Mammary epithelial cell (primary cell): ENCODE measurements at regions of chr18 and their contacts with region 1.

Region 1: DNA sequence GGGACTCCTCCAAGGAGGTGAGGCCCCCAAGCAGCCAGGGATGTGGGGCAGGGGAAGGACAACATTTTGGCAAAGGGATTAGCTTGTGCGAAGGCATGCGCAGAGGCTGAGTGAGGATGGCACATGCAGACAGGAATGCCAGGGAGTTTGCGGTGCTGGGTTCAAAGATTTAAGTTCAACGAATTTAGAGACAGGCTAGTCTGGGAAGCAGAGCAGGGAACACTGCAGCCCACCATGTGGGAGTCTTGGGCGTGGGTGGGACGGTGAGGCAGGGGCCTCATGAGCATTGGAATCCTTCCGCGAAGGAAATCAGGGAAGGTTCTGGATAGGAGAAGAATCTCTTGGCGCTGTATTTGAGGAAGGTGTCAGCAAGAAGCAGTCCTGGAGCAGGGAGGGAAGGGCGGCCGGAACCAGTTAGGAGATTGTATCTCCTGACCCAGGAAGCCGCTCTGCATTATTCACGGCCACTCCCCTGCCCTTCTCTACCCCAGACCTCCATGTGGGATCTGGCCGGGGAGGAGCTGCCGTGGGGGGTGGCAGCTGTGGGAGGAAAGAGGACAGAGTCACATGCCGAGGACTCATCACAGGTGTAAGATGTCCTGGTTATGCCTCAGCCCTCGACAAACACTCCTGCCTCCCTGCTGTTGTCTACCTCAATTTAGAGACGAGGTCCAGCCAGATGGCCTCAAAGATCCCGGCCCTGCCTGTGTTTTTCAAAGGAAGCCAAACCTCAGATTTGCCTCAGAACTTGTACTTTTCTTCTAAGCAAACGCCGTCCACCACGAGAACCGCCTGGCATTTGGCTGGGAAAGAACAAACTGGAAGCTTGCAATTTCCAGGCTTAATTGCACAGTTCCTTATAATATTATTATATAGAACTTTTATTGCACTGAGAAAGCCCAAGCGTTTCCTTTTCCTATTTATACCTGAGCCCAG is 123.7 kb upstream of the SMAD2 start:
- DNase-seq: no peak
- H3K4me3 ChIP-seq: no peak overlapping the region
- H3K27ac ChIP-seq: no peak overlapping the region
- H3K4me1 ChIP-seq: peaks cover 18% of the 10 kb centered on the region
- H3K27me3 ChIP-seq: no peaks in the 10 kb centered on the region
- CTCF ChIP-seq: no peak

Region 2: GRCh38 chr18:48085781-48086487 is 31.8 kb after region 1 on chr18:
- CTCF ChIA-PET with region 1: no interaction called
- dilution Hi-C with region 1: no loop called
- in situ Hi-C with region 1: no loop called
- intact Hi-C with region 1: loop called (anchors 5 kb)
- DNase-seq: peak; percentile 24
- H3K4me3 ChIP-seq: no peak overlapping the region
- H3K27ac ChIP-seq: no peak overlapping the region
- H3K4me1 ChIP-seq: peaks cover 8% of the 10 kb centered on the region
- H3K27me3 ChIP-seq: no peaks in the 10 kb centered on the region
- CTCF ChIP-seq: no peak

Region 3: DNA sequence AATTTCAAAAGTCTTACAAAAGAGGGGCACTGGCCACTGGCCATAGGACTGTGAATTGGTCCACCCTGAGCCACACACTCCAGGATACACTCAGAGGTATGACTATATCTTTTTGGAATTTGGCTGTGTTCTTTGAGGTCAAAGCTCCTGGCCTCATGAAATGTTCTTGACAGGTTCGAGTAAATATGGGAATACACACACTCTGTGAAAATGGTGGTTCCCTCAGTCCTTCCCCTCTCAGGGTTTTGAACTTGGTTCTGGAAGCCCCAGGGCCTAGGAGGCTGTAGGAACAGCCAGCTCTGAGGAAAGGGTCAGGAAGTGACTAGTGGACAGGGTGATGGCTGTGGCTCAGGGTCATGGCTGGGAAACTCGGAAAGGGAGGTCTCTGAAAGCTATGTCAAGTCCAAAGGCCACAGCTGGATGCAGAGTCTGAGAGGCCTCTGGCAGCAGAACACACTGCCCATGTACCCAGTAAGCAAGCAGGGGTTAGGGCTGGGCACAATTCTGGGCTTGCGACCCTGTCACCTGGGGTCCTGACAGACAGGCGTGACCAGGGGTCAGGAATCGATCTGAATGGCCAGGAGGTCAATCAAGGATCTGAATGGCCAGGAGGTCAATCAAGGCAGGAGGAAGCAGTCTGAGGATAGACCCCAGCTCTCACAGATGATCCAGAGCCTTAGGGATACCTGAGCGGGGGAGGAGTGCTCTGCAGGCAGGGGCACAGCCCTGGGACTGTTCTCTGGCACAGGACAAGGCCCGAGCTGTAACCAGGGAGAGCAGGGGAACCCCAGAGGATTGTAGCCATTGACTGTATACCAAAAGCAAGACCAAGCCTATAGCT is 99.7 kb after region 1 on chr18:
- CTCF ChIA-PET with region 1: no interaction called
- dilution Hi-C with region 1: no loop called
- in situ Hi-C with region 1: loop called (anchors 10 to 25 kb)
- intact Hi-C with region 1: no loop called
- DNase-seq: peak; percentile 55
- H3K4me3 ChIP-seq: no peak overlapping the region
- H3K27ac ChIP-seq: no peak overlapping the region
- H3K4me1 ChIP-seq: peaks cover 47% of the 10 kb centered on the region
- H3K27me3 ChIP-seq: no peaks in the 10 kb centered on the region
- CTCF ChIP-seq: no peak

Region 4: GRCh38 chr18:48216624-48217257 is 162.6 kb after region 1 on chr18:
- CTCF ChIA-PET with region 1: no interaction called
- dilution Hi-C with region 1: no loop called
- in situ Hi-C with region 1: loop called in 1 of 2 experiments (anchors 10 kb)
- intact Hi-C with region 1: no loop called
- DNase-seq: no peak
- H3K4me3 ChIP-seq: no peak overlapping the region
- H3K27ac ChIP-seq: no peak overlapping the region
- H3K4me1 ChIP-seq: peaks cover 11% of the 10 kb centered on the region
- H3K27me3 ChIP-seq: no peaks in the 10 kb centered on the region
- CTCF ChIP-seq: no peak

Region 5: DNA sequence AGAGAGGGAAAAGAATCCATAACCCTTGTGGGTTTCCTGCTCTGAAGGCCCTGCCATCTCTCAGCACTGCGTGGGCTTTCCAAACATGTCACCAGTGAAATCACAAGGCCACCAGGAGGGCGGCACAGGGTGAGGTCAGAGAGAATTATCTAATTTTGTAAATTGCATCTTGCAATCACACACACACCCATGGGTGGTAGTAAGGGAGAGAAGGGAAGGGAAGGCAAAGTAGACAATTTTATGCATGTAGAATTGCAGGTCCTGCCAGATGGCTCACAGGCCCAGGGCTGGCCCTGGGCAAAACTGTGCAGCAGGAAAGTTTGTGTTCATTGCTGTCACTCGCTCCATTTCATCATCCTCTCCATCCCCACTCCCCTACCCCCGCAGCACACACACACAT is 376.0 kb after region 1 on chr18:
- CTCF ChIA-PET with region 1: no interaction called
- dilution Hi-C with region 1: loop called (anchors 10 kb)
- in situ Hi-C with region 1: no loop called
- intact Hi-C with region 1: no loop called
- DNase-seq: no peak
- H3K4me3 ChIP-seq: no peak overlapping the region
- H3K27ac ChIP-seq: no peak overlapping the region
- H3K4me1 ChIP-seq: no peaks in the 10 kb centered on the region
- H3K27me3 ChIP-seq: no peaks in the 10 kb centered on the region
- CTCF ChIP-seq: no peak